GM18951 (cell line): ENCODE measurements at regions of chr1 and their contacts with region 1.

Region 1: GRCh38 chr1:7669559-7670311 is 101.4 kb upstream of the VAMP3 start:
- POLR2A ChIP-seq: no peak

Region 2: DNA sequence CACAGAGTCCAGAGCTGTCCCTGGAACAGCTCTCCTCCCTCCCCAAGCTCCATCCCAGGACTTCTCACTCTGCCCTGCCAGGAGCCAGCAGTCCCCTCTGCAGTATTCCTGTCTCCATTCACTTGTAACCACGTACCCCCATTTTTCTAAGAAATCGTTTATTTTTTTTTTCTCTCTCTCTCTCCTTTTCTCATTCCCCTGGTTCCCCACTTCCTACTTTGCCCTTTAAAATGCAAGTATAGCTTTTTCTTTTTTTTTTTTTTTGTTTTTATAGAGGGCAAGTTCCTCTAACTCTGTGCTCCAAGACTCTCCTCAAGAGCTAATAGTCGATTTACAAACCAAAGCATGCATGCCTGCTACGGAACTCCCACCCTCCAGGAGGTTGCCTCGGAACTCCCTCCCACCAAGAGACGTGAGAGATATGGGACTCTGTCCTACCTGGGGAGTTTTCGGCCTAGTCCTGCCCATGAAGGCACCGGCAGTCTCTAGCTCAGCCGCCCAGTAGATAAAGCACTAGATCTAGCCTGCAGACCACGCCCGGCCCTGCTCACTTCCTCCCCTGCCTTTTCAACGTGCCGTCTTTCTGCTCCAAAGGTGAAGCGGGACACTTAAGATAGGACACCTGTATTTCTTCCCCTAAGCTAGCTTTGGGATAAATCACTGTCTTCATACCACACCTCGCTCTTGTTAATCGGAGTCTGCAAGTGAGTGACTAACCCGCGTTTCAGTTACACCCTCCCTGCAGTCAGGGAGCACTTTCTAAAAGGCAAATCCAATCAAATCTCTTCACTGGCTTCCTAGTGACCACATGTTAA is 243.2 kb after region 1 on chr1:
- in situ Hi-C with region 1: loop called (anchors 10 kb)
- POLR2A ChIP-seq: peak; percentile 49